Heart left ventricle (tissue), 16 donors: ENCODE measurements at regions of chr3 and their contacts with region 1.

Region 1: DNA sequence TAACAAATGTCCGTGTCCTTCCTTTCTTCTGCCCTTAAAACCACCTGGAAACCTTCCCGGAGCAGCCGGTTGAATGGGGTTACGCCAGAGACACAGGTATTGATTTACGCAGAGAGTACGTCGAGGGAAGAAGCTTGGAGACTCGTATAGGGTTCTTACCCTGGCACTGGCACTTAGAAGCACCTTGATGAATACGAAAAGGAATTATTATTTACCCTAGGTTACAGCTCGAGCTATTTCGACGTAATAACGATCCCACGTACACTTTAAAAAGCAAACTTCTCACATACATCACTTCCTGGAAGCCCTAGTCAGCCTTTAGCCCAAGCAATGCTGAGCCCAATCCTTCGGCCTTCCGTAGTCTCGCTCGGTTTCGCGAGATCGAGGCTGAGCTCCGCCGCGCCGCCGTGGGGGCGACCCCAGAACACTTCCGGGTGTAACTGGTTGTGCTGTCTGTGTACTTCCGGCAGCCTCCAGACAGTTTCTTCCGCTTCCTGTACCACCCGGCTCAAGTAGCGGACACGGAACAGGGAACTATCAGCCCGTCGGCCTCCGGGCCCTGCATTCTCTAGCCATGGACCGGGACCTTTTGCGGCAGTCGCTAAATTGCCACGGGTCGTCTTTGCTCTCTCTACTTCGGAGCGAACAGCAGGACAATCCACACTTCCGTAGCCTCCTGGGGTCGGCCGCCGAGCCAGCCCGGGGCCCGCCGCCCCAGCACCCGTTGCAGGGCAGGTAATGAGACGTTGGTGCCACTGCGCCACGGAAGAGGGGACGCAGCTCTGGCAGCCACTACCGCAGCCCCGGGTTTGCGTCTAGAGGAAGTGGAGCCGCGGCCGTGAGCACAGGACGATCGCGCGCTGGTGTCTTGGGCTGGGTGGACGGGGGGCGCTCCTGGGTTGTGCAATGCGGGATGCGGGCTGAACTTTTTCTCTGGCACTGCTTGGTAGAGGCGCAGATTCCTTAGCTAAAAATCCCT is at the start of gene TTC14:
- DNase-seq: peak; percentile 90 to 97 (median 94)
- ATAC-seq: peak; percentile 99 to 100 (median 100)
- H3K4me3 ChIP-seq: peak within 1 kb of the TSS; percentile 86 to 97 (median 90)
- H3K27ac ChIP-seq: peak within 1 kb of the TSS in 11 of 12 donors; percentile 61 to 92 (median 73)
- H3K4me1 ChIP-seq: peaks cover 0 to 22% (median 10%) of the 10 kb centered on the region in 12 donors
- H3K27me3 ChIP-seq: peaks cover 0 to 6% (median 0%) of the 10 kb centered on the region in 9 donors
- CTCF ChIP-seq: no peak
- POLR2A ChIP-seq: peak in 1 of 2 donors; percentile 61
- total RNA-seq, gene TTC14: 4.8 to 20.4 (median 11.6) TPM

Region 2: GRCh38 chr3:179811321-179812095 is 790.5 kb before region 1 on chr3:
- intact Hi-C with region 1: loop called in 3 of 10 experiments (anchors 10 kb)
- DNase-seq: peak in 1 of 5 donors; percentile 15
- ATAC-seq: peak in 3 of 4 donors; percentile 62 to 87 (median 77)
- H3K4me3 ChIP-seq: no peak overlapping the region
- H3K27ac ChIP-seq: no peak overlapping the region
- H3K4me1 ChIP-seq: peaks cover 0 to 7% (median 0%) of the 10 kb centered on the region in 12 donors
- H3K27me3 ChIP-seq: no peaks in the 10 kb centered on the region
- CTCF ChIP-seq: peak; percentile 30 to 74 (median 55)
- POLR2A ChIP-seq: no peak

Region 3: DNA sequence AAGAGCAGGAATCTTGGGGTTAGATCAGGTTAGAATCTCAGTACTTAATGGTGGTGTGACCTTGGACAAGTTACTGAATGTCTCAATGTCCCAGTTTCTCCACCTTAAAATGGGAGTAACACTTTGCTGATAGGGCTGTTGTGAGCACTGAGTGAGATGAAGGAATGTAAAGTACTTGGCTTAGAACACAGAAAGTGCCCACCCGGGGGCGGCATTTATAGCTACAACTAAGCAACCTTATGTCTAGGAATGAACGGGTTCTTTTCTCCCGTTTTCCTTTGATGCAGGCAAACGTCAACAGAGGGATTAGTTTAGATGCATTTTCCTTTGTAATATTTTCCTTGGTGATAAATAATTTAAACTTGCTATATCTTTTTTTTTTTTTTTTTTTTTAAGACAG is 772.6 kb before region 1 on chr3:
- intact Hi-C with region 1: loop called in 1 of 10 experiments (anchors 10 kb)
- DNase-seq: no peak
- ATAC-seq: no peak
- H3K4me3 ChIP-seq: no peak overlapping the region
- H3K27ac ChIP-seq: no peak overlapping the region
- H3K4me1 ChIP-seq: peaks cover 0 to 9% (median 0%) of the 10 kb centered on the region in 12 donors
- H3K27me3 ChIP-seq: no peaks in the 10 kb centered on the region
- CTCF ChIP-seq: no peak
- POLR2A ChIP-seq: no peak

Region 4: DNA sequence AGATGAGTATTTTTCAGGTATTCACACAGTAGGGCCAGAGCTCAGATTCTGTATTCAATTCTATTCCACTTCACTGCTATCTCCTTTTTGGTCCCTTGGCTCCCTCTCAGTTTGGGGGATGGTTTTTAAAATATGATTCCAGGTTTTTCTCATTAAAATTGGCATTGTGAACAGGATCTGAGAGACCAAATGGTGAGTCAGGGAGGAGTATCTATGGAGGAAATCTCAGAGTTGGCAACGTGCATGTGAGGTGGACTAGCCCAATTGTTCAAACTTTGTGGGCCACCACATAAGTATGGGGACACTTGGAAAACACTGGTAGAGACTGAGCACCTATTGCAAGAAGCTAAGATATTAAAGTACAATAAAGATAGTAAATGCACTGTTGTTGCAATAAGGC is 53.9 kb before region 1 on chr3:
- intact Hi-C with region 1: no loop called
- DNase-seq: no peak
- ATAC-seq: no peak
- H3K4me3 ChIP-seq: no peak overlapping the region
- H3K27ac ChIP-seq: no peak overlapping the region
- H3K4me1 ChIP-seq: no peaks in the 10 kb centered on the region
- H3K27me3 ChIP-seq: no peaks in the 10 kb centered on the region
- CTCF ChIP-seq: no peak
- POLR2A ChIP-seq: no peak

Region 5: DNA sequence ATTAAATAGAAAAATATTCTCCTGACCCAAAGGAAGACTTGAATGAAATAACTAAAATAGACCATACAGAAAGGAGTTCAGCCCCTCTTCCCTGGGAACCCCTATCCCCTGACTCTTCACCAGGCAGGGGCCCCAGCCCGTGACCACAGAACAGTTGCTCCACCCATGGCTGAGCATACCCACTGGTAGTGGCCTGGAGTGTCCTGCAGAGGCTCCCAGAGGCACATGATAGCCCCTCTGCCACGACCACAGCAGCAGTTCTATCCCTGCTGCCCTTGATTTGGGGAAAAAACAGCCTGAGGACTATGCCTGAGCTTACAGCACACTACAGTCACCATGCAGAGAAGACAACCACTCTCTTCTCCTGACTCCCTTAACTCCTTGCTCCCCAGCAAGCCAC is 31.7 kb after region 1 on chr3:
- intact Hi-C with region 1: no loop called
- DNase-seq: no peak
- ATAC-seq: no peak
- H3K4me3 ChIP-seq: no peak overlapping the region
- H3K27ac ChIP-seq: no peak overlapping the region
- H3K4me1 ChIP-seq: no peaks in the 10 kb centered on the region
- H3K27me3 ChIP-seq: peaks cover 0 to 6% (median 0%) of the 10 kb centered on the region in 9 donors
- CTCF ChIP-seq: no peak
- POLR2A ChIP-seq: no peak

Region 6: GRCh38 chr3:180989291-180990163 is 387.6 kb after region 1 on chr3 and contains the start of gene DNAJC19:
- intact Hi-C with region 1: loop called in 1 of 10 experiments (anchors 5 kb)
- DNase-seq: peak; percentile 91 to 95 (median 93)
- ATAC-seq: peak; percentile 98 to 99 (median 99)
- H3K4me3 ChIP-seq: peak within 1 kb of the TSS; percentile 38 to 94 (median 82)
- H3K27ac ChIP-seq: peak within 1 kb of the TSS; percentile 66 to 92 (median 84)
- H3K4me1 ChIP-seq: peaks cover 0 to 29% (median 17%) of the 10 kb centered on the region in 12 donors
- H3K27me3 ChIP-seq: no peaks in the 10 kb centered on the region
- CTCF ChIP-seq: no peak
- POLR2A ChIP-seq: peak in 1 of 2 donors; percentile 79
- total RNA-seq, gene DNAJC19: 51.7 to 122 (median 85.6) TPM